Common myeloid progenitor, CD34-positive (primary cell): ENCODE measurements at regions of chr6 and their contacts with region 1.

Region 1: GRCh38 chr6:2765166-2765895 is at the start of gene WRNIP1:
- DNase-seq: peak; percentile 99 to 100 (median 99)
- H3K4me3 ChIP-seq: peak within 1 kb of the TSS; percentile 81 to 98 (median 95)
- H3K27ac ChIP-seq: peak within 1 kb of the TSS; percentile 92 to 96
- H3K4me1 ChIP-seq: peaks cover 24 to 52% (median 41%) of the 10 kb centered on the region in 4 experiments
- H3K27me3 ChIP-seq: no peaks in the 10 kb centered on the region

Region 2: GRCh38 chr6:2708456-2708855 is 56.9 kb before region 1 on chr6:
- CTCF ChIA-PET with region 1: no interaction called
- POLR2A ChIA-PET with region 1: no interaction called
- DNase-seq: no peak
- H3K4me3 ChIP-seq: no peak overlapping the region
- H3K27ac ChIP-seq: no peak overlapping the region
- H3K4me1 ChIP-seq: peaks cover 4 to 24% (median 6%) of the 10 kb centered on the region in 4 experiments
- H3K27me3 ChIP-seq: no peaks in the 10 kb centered on the region

Region 3: DNA sequence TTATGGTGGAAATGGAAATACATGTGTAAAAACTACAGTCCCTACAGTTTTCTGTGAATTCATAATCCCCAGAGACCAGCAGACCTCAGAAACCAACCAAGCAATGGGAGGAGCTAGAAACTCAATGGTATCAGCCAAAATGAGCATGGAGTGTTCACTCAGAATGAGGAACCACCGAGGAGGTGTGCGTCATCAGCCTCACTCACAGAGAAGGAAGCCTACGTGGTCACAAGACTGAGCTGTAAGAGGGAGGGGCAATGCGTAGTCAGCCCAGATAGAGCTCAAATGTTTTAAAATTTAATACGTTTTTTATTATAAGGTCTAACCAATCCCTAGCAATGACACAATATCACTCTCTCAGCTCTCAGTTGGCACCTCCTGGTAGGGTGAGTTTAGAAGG is 32.0 kb before region 1 on chr6:
- CTCF ChIA-PET with region 1: interaction called, 82 read pairs
- POLR2A ChIA-PET with region 1: no interaction called
- DNase-seq: peak; percentile 99 to 100 (median 99)
- H3K4me3 ChIP-seq: peak overlapping the region in 1 of 7 experiments; percentile 9
- H3K27ac ChIP-seq: peak overlapping the region; percentile 87 to 92
- H3K4me1 ChIP-seq: peaks cover 11 to 57% (median 49%) of the 10 kb centered on the region in 4 experiments
- H3K27me3 ChIP-seq: no peaks in the 10 kb centered on the region

Region 4: DNA sequence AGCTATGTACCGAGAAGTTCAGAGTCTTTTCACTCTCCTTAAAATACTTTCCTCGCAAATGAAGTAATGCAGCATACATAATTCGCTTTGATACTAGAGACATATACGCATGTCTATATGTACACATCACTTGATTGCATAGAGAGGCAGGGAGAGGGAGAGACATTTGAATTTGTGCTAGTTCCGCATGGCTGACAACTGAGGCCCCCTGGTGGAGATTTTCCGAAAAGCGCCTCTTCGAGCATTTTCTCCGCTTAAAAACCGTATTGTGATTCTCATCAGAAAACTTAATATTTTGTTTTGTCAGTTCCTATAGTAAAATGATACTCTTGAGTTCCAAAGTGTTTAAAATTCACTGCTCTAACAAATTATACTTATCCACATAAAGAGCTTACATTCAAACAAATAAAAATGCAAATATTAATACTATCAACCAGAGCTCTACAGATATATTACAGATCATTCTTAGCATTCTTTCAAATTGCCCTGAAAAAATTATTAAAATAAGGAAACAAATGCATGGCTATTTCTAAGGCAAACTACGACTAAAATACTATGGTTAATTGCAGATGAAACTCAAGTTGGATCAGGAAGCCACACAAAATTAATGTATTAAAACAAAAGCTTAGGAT is 15.2 kb before region 1 on chr6:
- CTCF ChIA-PET with region 1: interaction called, 227 read pairs
- POLR2A ChIA-PET with region 1: interaction called, 12 read pairs
- DNase-seq: peak; percentile 74 to 87 (median 84)
- H3K4me3 ChIP-seq: peak overlapping the region in 1 of 7 experiments; percentile 51
- H3K27ac ChIP-seq: no peak overlapping the region
- H3K4me1 ChIP-seq: peaks cover 23 to 57% (median 35%) of the 10 kb centered on the region in 4 experiments
- H3K27me3 ChIP-seq: no peaks in the 10 kb centered on the region

Region 5: GRCh38 chr6:2783188-2783963 is 18.0 kb after region 1 on chr6:
- CTCF ChIA-PET with region 1: interaction called, 192 read pairs
- POLR2A ChIA-PET with region 1: interaction called, 4 read pairs
- DNase-seq: peak; percentile 75 to 95 (median 90)
- H3K4me3 ChIP-seq: peak overlapping the region in 3 of 7 experiments; percentile 30 to 49 (median 46)
- H3K27ac ChIP-seq: peak overlapping the region; percentile 71 to 78
- H3K4me1 ChIP-seq: peaks cover 15 to 55% (median 39%) of the 10 kb centered on the region in 4 experiments
- H3K27me3 ChIP-seq: no peaks in the 10 kb centered on the region